ENCODE measurements at regions of chr2 and their contacts with region 1.

Region 1: DNA sequence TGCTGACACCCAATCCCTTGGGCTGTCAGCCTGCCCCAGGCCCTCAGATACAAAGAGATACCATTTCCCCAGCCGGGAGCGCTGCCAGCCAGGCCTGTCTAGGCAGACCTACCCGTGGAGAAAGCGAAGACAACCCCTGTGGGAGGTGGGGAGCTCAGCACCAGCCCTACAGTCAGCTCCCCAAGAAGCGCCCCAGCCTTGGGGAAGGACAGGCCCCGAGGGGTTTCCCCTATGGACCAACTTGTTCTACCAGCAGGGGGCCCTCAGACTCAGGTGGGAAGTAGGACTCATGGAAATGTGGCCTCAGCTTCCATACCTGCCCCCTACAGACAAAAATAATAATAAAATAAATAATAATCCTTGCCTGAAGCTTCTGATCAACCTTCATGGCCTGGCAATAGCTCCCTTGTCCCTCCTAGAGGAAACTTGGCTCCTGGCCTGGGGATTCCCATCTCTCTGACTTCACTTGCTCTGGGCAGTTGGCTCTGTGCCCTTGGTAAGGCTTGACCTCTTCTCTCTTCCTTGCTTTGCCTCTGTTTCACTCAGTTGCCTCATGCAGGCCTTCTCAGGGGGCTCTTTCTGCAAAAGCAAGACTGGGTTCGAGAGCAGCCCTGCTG is 7.0 kb downstream of the SLC35F6 start:
- DNase-seq: peak; percentile 37 to 78
- ATAC-seq: peak; percentile 28 to 64; a peak in 5 of 6 replicates
- H3K4me3 ChIP-seq: peak overlapping the region; percentile 9; the same call in 1 of the 3 replicates
- H3K27ac ChIP-seq: peak overlapping the region; percentile 85 to 95
- H3K4me1 ChIP-seq: peaks cover 78% of the 10 kb centered on the region
- CTCF ChIP-seq: peak; percentile 50
- EP300 ChIP-seq: peak in 1 of 2 experiments; percentile 47; a peak in 1 of 5 replicates
- POLR2A ChIP-seq: no peak
- RAD21 ChIP-seq: peak in 1 of 2 experiments; percentile 31; a peak in 2 of 5 replicates

Region 2: DNA sequence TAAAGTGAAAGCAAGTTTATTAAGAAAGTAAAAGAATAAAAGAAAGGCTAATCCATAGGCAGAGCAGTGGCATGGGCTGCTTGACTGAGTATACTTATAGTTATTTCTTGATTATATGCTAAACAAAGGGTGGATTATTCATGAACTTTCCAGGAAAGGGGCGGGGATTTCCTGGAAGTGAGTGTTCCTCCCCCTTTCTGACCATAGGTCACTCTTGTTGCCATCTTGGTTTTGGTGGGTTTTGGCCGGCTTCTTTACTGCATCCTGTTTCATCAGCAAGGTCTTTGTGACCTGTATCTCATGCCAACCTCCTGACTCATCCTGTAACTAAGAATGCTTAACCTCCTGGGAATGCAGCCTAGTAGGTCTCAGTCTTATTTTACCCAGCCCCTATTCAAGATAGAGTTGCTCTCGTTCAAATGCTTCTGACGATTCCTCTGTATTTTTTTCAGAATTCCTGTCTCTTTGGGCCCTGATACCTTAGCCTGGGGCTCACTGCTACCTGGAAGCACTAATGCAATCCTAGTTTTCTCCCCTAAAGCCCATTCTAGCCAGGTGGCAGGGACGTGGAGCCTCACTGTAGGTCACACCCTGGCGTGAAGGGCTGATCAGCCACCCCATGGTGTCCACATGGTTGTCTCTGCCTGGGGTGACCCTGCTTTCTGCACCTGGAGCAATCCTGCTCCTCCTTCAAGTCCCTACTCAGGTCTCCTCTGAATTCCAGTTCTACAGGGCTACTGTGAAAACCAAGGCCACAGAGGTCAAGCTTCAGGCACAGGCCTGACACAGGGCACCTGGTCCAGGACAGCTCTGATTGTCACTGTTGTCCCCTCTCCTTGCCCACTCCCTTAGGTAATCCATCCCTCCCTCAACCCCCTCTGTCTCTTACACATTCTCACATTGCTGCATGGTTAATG is 13.0 kb before region 1 on chr2:
- CTCF ChIA-PET with region 1: interaction called, 12 read pairs
- POLR2A ChIA-PET with region 1: interaction called, 4 read pairs
- DNase-seq: peak; percentile 70 to 98
- ATAC-seq: peak; percentile 70 to 91
- H3K4me3 ChIP-seq: no peak overlapping the region
- H3K27ac ChIP-seq: peak overlapping the region; percentile 97
- H3K4me1 ChIP-seq: peaks cover 57% of the 10 kb centered on the region
- CTCF ChIP-seq: no peak
- EP300 ChIP-seq: peak; percentile 86 to 94
- POLR2A ChIP-seq: no peak
- RAD21 ChIP-seq: peak; percentile 29 to 32; a peak in 1 of 5 replicates

Region 3: DNA sequence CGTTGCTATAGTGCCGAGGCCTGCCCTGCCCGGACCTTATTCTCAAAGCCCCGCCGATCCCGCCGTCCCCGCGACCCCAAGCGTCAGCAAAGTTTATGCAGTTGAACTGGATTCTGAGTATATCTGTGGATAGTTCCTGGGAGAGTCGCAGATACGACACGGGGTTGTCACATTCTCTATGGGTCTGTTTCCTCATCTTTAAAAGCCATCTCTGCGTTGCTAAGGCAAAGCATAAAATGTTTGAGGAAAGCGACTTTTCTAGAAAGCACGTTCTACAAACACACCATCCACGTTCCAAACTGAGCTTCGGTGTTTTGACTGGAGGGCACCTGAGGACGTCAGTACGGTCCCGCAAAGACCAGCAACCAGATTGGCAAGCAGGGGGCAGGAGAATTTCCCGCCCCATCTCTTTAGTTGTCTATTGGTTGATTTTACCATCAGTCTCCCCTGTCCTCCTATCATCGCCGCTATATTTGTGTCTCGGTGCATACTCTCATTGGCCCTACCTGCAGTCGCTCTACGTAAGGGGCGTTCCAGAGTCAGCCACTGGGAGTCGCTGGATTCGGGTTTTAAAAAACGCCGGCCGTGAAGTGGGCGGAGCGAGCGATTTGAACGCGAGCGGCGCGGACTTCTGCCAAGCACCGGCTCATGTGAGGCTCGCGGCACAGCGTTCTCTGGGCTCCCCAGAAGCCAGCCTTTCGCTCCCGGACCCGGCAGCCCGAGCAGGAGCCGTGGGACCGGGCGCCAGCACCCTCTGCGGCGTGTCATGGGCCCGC is 14.5 kb after region 1 on chr2 and contains the start of gene CENPA:
- CTCF ChIA-PET with region 1: interaction called, 16 read pairs
- POLR2A ChIA-PET with region 1: interaction called, 5 read pairs
- DNase-seq: peak; percentile 100
- ATAC-seq: peak; percentile 95 to 99
- H3K4me3 ChIP-seq: peak within 1 kb of the TSS; percentile 94
- H3K27ac ChIP-seq: peak within 1 kb of the TSS; percentile 89 to 96
- H3K4me1 ChIP-seq: peaks cover 13% of the 10 kb centered on the region; the same call in 2 of the 3 replicates
- CTCF ChIP-seq: no peak
- EP300 ChIP-seq: no peak
- POLR2A ChIP-seq: peak; percentile 33; the same call in 1 of the 2 replicates
- RAD21 ChIP-seq: peak in 1 of 2 experiments; percentile 2; a peak in 1 of 5 replicates
- polyA plus RNA-seq, gene CENPA: 44.1 and 46.0 TPM in 2 replicates